Heart left ventricle (tissue), 16 donors: ENCODE measurements at regions of chr5 and their contacts with region 1.

Region 1: GRCh38 chr5:56270568-56271392 is 37.6 kb upstream of the ANKRD55 start:
- DNase-seq: peak; percentile 80 to 87 (median 86)
- ATAC-seq: peak; percentile 97 to 100 (median 98)
- H3K4me3 ChIP-seq: no peak overlapping the region
- H3K27ac ChIP-seq: peak overlapping the region in 1 of 12 donors; percentile 48
- H3K4me1 ChIP-seq: peaks cover 0 to 19% (median 2%) of the 10 kb centered on the region in 12 donors
- H3K27me3 ChIP-seq: no peaks in the 10 kb centered on the region
- CTCF ChIP-seq: peak; percentile 95 to 100 (median 99)
- POLR2A ChIP-seq: no peak

Region 2: DNA sequence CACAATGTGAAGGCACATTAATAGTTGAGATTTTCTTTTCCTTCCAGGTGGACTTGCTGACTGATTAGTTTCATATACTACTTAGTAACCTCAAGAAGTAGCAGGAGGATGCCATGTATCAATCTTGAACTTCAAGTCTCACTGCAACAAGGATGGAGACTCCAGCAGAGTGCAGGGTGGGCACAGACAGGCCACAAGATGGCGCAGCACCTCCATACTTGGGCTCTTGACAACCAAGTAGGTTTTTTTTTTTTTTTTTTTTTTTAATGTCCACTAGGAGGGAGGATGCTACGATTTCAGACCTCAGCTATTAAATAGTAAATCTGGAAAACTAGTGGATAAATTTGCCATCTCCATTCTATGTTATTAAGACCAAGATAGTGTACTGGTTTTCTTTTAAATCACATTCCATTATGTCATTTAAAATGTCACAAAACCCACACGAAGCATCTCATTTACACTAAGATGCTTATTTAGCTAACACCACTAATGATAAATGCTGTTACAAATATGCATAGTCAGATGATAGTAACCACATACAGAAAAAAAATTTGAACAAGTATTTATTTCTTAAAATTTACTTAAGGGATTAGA is 334.6 kb before region 1 on chr5:
- intact Hi-C with region 1: loop called in 4 of 10 experiments (anchors 5 to 10 kb)
- DNase-seq: peak; percentile 73 to 88 (median 81)
- ATAC-seq: peak; percentile 66 to 84 (median 82)
- H3K4me3 ChIP-seq: no peak overlapping the region
- H3K27ac ChIP-seq: no peak overlapping the region
- H3K4me1 ChIP-seq: peaks cover 0 to 7% (median 0%) of the 10 kb centered on the region in 12 donors
- H3K27me3 ChIP-seq: no peaks in the 10 kb centered on the region
- CTCF ChIP-seq: peak; percentile 78 to 94 (median 87)
- POLR2A ChIP-seq: no peak

Region 3: GRCh38 chr5:56481428-56482357 is 210.9 kb after region 1 on chr5:
- intact Hi-C with region 1: loop called in 3 of 10 experiments (anchors 5 to 10 kb)
- DNase-seq: peak; percentile 73 to 80 (median 76)
- ATAC-seq: peak; percentile 32 to 75 (median 62)
- H3K4me3 ChIP-seq: peak overlapping the region; percentile 51 to 79 (median 68)
- H3K27ac ChIP-seq: peak overlapping the region; percentile 88 to 98 (median 94)
- H3K4me1 ChIP-seq: peaks cover 4 to 45% (median 22%) of the 10 kb centered on the region in 12 donors
- H3K27me3 ChIP-seq: no peaks in the 10 kb centered on the region
- CTCF ChIP-seq: peak in 8 of 12 donors; percentile 14 to 52 (median 30)
- POLR2A ChIP-seq: no peak

Region 4: GRCh38 chr5:56615361-56616153 is 344.8 kb after region 1 on chr5:
- intact Hi-C with region 1: loop called in 1 of 10 experiments (anchors 10 kb)
- DNase-seq: peak in 2 of 5 donors; percentile 38 to 54
- ATAC-seq: peak; percentile 32 to 78 (median 68)
- H3K4me3 ChIP-seq: no peak overlapping the region
- H3K27ac ChIP-seq: peak overlapping the region in 11 of 12 donors; percentile 18 to 61 (median 45)
- H3K4me1 ChIP-seq: peaks cover 3 to 28% (median 19%) of the 10 kb centered on the region in 12 donors
- H3K27me3 ChIP-seq: no peaks in the 10 kb centered on the region
- CTCF ChIP-seq: no peak
- POLR2A ChIP-seq: no peak

Region 5: GRCh38 chr5:56838409-56839039 is 567.7 kb after region 1 on chr5:
- intact Hi-C with region 1: loop called (anchors 1 to 5 kb)
- DNase-seq: no peak
- ATAC-seq: peak; percentile 30 to 74 (median 67)
- H3K4me3 ChIP-seq: peak overlapping the region in 3 of 12 donors; percentile 18 to 19 (median 19)
- H3K27ac ChIP-seq: peak overlapping the region in 10 of 12 donors; percentile 9 to 63 (median 32)
- H3K4me1 ChIP-seq: peaks cover 0 to 86% (median 49%) of the 10 kb centered on the region in 12 donors
- H3K27me3 ChIP-seq: no peaks in the 10 kb centered on the region
- CTCF ChIP-seq: peak; percentile 35 to 75 (median 61)
- POLR2A ChIP-seq: no peak

Region 6: GRCh38 chr5:56947052-56947451 is 676.3 kb after region 1 on chr5:
- intact Hi-C with region 1: loop called in 1 of 10 experiments (anchors 5 kb)
- DNase-seq: no peak
- ATAC-seq: no peak
- H3K4me3 ChIP-seq: no peak overlapping the region
- H3K27ac ChIP-seq: no peak overlapping the region
- H3K4me1 ChIP-seq: peaks cover 0 to 19% (median 12%) of the 10 kb centered on the region in 12 donors
- H3K27me3 ChIP-seq: no peaks in the 10 kb centered on the region
- CTCF ChIP-seq: no peak
- POLR2A ChIP-seq: no peak

Region 7: DNA sequence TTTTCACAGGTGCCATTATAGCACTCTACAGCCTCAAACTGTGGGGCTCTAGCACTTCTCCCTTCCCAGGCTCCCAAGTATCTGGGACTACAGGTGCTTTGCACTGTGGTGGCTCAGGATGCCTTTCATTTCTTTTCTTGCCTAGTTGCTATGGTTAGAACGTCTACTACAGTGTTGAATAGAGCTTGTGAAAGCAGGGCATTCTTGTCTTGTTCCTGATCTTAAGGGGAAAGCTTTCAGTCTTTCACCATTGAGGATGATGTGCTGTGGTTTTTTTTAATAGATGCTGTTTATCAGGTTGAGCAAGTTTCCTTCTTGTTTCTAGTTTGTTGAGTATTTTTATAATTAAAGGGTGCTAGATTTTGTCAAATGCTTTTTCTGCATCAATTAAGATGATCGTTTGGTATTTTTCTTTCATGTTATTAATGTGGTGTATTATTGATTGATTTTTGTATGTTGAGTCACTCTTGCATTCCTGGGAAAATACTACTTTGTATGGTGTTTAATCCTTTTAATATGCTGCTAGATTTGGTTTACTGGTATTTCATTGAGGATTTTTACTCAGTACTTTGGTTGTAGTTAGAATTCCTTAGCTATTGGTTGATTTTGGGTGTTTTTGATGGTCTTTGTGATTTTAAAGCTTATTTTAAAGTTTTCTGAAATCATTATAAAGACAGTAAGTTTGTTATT is 938.7 kb after region 1 on chr5:
- intact Hi-C with region 1: loop called in 1 of 10 experiments (anchors 10 kb)
- DNase-seq: no peak
- ATAC-seq: no peak
- H3K4me3 ChIP-seq: no peak overlapping the region
- H3K27ac ChIP-seq: peak overlapping the region in 4 of 12 donors; percentile 10 to 90 (median 63)
- H3K4me1 ChIP-seq: peaks cover 2 to 62% (median 44%) of the 10 kb centered on the region in 12 donors
- H3K27me3 ChIP-seq: no peaks in the 10 kb centered on the region
- CTCF ChIP-seq: no peak
- POLR2A ChIP-seq: no peak